Heart left ventricle (tissue), 16 donors: ENCODE measurements at regions of chr11 and their contacts with region 1.

Region 1: DNA sequence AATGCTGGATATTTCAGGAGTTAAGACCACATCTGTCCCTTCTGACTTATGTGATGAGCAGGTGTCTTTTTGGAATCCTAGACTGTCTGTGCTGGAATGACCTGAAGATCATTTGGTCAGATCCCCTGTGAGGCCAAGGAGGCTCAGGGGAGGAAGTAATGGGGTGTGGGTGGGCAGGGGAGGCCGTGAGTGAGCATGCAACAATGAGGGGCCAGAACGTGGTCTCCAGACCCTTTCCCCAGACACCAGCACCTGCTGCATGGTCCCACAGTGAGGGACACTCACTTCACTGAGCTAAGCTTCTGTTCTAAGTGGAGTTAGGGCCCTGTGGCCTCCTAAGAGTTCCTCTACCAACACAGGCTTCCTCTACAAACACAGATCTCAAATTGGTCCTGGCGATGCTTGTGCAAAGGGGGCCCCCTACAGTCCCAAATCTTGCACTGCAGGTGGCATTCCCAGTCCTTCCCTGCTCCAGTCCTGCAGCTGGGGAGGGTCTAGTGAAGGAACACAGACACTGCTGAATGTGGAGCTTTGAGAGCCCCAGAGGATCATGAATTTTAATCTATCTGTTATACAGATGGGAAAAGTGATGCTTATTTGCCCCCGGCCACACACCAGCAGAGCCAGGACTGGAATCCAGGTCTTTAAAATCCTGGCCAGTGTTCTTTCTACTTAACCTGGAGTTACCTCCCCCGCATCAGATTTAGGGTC is 7.4 kb downstream of the USP2 start:
- DNase-seq: peak in 4 of 5 donors; percentile 62 to 77 (median 66)
- ATAC-seq: peak in 2 of 4 donors; percentile 4 to 9
- H3K4me3 ChIP-seq: no peak overlapping the region
- H3K27ac ChIP-seq: peak overlapping the region in 10 of 12 donors; percentile 87 to 100 (median 94)
- H3K4me1 ChIP-seq: peaks cover 0 to 90% (median 60%) of the 10 kb centered on the region in 12 donors
- H3K27me3 ChIP-seq: no peaks in the 10 kb centered on the region
- CTCF ChIP-seq: peak; percentile 76 to 91 (median 84)
- POLR2A ChIP-seq: no peak

Region 2: DNA sequence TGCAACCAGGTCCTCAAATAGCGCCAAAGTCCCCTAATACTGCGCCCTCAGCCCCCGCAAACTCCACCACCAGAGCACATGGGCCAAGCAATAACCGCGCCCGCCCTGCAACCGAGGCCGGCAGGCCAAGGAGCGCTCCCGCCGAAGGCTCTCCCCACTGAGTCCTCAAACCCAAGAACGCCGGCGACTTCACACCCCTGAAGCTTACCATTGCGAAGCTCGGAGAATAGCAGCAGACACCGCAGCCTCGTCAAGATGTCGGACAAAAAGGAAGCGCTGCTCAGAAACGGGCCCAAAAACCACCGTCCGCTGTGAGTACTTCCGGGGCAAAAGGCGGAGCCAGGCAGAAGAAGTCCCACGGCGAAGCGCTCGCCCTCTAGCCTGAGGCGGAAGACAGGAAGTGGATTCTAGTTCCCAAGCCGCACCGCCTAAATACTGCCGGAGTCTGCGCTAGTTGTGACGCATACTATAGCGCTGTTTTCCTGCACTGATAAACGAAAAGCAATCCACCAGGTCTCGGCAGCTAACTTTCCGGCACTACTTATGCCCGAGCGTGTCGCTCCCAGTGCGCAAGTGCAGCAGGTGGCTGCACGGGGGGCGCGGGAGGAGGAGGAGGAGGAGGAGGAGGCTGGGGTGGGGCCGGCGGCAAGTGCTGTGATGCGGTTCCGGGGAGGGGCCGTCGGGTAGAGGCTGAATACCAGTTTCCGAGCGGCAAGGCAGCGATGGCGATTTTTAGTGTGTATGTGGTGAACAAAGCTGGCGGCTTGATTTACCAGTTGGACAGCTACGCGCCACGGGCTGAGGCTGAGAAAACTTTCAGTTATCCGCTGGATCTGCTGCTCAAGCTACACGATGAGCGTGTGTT is 355.8 kb before region 1 on chr11 and contains the starts of genes RPS25 and TRAPPC4:
- intact Hi-C with region 1: no loop called
- DNase-seq: peak; percentile 96 to 97 (median 96)
- ATAC-seq: peak; percentile 95 to 97 (median 96)
- H3K4me3 ChIP-seq: peak within 1 kb of the TSS; percentile 74 to 98 (median 86)
- H3K27ac ChIP-seq: peak within 1 kb of the TSS; percentile 60 to 97 (median 94)
- H3K4me1 ChIP-seq: peaks cover 9 to 54% (median 35%) of the 10 kb centered on the region in 12 donors
- H3K27me3 ChIP-seq: no peaks in the 10 kb centered on the region
- CTCF ChIP-seq: peak in 4 of 12 donors; percentile 8 to 38 (median 16)
- POLR2A ChIP-seq: peak in 1 of 2 donors; percentile 38
- total RNA-seq, gene RPS25: 719 to 1,307 (median 821) TPM
- total RNA-seq, gene TRAPPC4: 31.9 to 57.1 (median 44.4) TPM

Region 3: DNA sequence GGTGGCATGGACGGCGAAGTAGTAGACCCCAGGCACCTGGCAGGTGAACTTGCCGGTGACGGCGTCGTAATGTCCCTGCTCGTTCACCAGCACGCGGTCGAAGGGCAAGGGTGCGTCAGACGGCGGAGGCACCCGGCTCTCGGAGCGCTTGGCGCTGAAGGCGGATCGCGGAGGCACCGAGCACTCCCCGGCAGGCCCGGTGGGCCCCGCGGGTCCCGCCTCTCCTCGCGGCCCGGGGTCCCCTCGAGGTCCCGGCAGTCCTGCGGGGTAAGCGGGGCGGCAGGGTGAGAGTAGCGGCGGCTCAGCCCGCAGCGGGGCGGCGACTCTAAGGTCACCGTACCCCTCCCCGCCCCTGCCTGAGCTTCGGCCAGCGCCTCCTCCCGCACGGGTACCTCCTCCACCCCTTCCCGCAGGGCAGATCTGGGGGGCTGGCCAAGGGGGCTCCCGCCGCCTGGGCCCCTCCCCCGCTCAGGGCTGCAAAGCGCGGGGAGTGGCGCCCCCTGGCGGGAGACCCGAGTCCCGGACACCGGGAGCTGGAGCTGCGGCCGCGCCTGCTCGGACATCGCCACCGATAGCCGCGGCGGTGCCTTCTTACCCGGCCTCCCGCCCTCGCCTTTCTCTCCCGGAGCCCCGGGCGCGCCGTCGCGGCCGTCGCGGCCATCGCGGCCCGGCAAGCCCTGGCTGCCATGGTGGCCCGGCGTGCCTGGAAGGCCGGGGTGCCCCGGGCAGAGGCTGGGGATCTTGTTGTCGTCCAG is 34.3 kb before region 1 on chr11:
- intact Hi-C with region 1: loop called in 3 of 10 experiments (anchors 1 to 5 kb)
- DNase-seq: peak; percentile 83 to 87 (median 85)
- ATAC-seq: peak in 3 of 4 donors; percentile 35 to 78 (median 65)
- H3K4me3 ChIP-seq: peak overlapping the region; percentile 57 to 97 (median 76)
- H3K27ac ChIP-seq: peak overlapping the region; percentile 90 to 100 (median 97)
- H3K4me1 ChIP-seq: peaks cover 7 to 67% (median 47%) of the 10 kb centered on the region in 12 donors
- H3K27me3 ChIP-seq: peaks cover 0 to 33% (median 0%) of the 10 kb centered on the region in 9 donors
- CTCF ChIP-seq: peak; percentile 84 to 98 (median 96)
- POLR2A ChIP-seq: peak in 1 of 2 donors; percentile 43

Region 4: DNA sequence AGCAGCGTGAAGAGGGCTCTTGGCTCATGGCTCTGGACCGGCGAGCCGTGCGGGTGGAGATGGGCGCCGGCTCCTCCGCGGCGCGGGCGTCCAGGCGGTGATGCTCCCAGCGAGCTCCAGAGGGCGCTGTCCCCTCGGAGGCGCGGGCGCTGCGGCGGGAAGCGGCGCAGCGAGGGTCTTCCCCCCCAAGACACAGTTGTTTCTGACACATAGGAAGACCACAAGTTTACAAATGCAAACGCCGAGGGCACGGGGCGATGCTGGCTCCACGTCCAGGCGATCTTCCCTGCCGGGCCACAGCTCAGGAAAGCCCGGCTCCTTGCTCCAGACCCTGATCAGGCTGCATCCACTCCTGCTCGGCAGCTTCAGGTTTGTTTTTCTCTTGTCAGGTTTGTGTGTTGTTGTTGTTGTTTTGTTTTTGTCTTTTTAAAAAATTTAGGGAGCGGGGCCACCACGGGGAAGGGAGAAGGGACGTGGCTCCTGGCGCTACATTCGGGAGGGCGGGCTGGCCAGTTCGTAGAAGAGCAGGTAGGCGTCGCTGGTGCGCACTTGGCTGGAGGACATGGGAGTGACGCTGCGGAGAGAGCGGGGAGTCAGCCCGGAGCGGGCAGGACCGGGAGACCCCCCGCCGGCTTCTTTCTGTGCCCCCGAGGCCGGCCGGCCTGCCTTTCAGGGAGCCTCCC is 17.6 kb before region 1 on chr11:
- intact Hi-C with region 1: loop called in 7 of 10 experiments (anchors 1 to 2 kb)
- DNase-seq: peak; percentile 84 to 91 (median 85)
- ATAC-seq: peak; percentile 35 to 71 (median 68)
- H3K4me3 ChIP-seq: peak overlapping the region in 11 of 12 donors; percentile 40 to 73 (median 60)
- H3K27ac ChIP-seq: peak overlapping the region; percentile 22 to 99 (median 74)
- H3K4me1 ChIP-seq: peaks cover 3 to 73% (median 39%) of the 10 kb centered on the region in 12 donors
- H3K27me3 ChIP-seq: peaks cover 0 to 11% (median 0%) of the 10 kb centered on the region in 9 donors
- CTCF ChIP-seq: peak; percentile 76 to 95 (median 90)
- POLR2A ChIP-seq: peak in 1 of 2 donors; percentile 25